ENCODE measurements at regions of chr20 and their contacts with region 1.

Region 1: GRCh38 chr20:17357218-17357617 is 130.4 kb downstream of the PCSK2 start:
- DNase-seq: no peak
- ATAC-seq: no peak
- H3K4me3 ChIP-seq: no peak overlapping the region
- H3K27ac ChIP-seq: no peak overlapping the region
- H3K4me1 ChIP-seq: no peaks in the 10 kb centered on the region
- H3K27me3 ChIP-seq: no peaks in the 10 kb centered on the region
- CTCF ChIP-seq: no peak
- POLR2A ChIP-seq: no peak

Region 2: GRCh38 chr20:17273717-17274116 is 83.5 kb before region 1 on chr20:
- in situ Hi-C with region 1: loop called in 1 of 4 experiments (anchors 25 kb)
- intact Hi-C with region 1: no loop called
- DNase-seq: no peak
- ATAC-seq: no peak
- H3K4me3 ChIP-seq: no peak overlapping the region
- H3K27ac ChIP-seq: no peak overlapping the region
- H3K4me1 ChIP-seq: no peaks in the 10 kb centered on the region
- H3K27me3 ChIP-seq: no peaks in the 10 kb centered on the region
- CTCF ChIP-seq: no peak
- POLR2A ChIP-seq: no peak

Measured in gastrocnemius medialis (tissue), 4 donors.